Heart right ventricle (tissue), 16 donors: ENCODE measurements at regions of chr3 and their contacts with region 1.

Region 1: GRCh38 chr3:45647148-45647619 is 42.0 kb upstream of the SACM1L start:
- DNase-seq: no peak
- ATAC-seq: peak; percentile 48 to 81 (median 62)
- H3K4me3 ChIP-seq: no peak overlapping the region
- H3K27ac ChIP-seq: peak overlapping the region in 8 of 10 donors; percentile 3 to 80 (median 41)
- H3K4me1 ChIP-seq: peaks cover 0 to 60% (median 47%) of the 10 kb centered on the region in 9 donors
- H3K27me3 ChIP-seq: no peaks in the 10 kb centered on the region
- CTCF ChIP-seq: no peak

Region 2: GRCh38 chr3:45599984-45600650 is 47.1 kb before region 1 on chr3:
- intact Hi-C with region 1: loop called in 3 of 10 experiments (anchors 5 kb)
- DNase-seq: no peak
- ATAC-seq: peak in 1 of 8 donors; percentile 1
- H3K4me3 ChIP-seq: no peak overlapping the region
- H3K27ac ChIP-seq: peak overlapping the region in 8 of 10 donors; percentile 40 to 93 (median 62)
- H3K4me1 ChIP-seq: peaks cover 42 to 100% (median 94%) of the 10 kb centered on the region in 9 donors
- H3K27me3 ChIP-seq: no peaks in the 10 kb centered on the region
- CTCF ChIP-seq: no peak

Region 3: GRCh38 chr3:45607790-45608189 is 39.4 kb before region 1 on chr3:
- intact Hi-C with region 1: loop called in 3 of 10 experiments (anchors 5 kb)
- DNase-seq: peak in 1 of 2 donors; percentile 50
- ATAC-seq: peak in 7 of 8 donors; percentile 30 to 76 (median 65)
- H3K4me3 ChIP-seq: peak overlapping the region in 3 of 10 donors; percentile 0 to 21 (median 11)
- H3K27ac ChIP-seq: peak overlapping the region; percentile 53 to 91 (median 86)
- H3K4me1 ChIP-seq: peaks cover 39 to 100% (median 94%) of the 10 kb centered on the region in 9 donors
- H3K27me3 ChIP-seq: no peaks in the 10 kb centered on the region
- CTCF ChIP-seq: no peak

Region 4: GRCh38 chr3:45626096-45626887 is 20.9 kb before region 1 on chr3:
- intact Hi-C with region 1: loop called in 1 of 10 experiments (anchors 2 kb)
- DNase-seq: no peak
- ATAC-seq: no peak
- H3K4me3 ChIP-seq: no peak overlapping the region
- H3K27ac ChIP-seq: no peak overlapping the region
- H3K4me1 ChIP-seq: peaks cover 2 to 64% (median 34%) of the 10 kb centered on the region in 9 donors
- H3K27me3 ChIP-seq: no peaks in the 10 kb centered on the region
- CTCF ChIP-seq: no peak

Region 5: GRCh38 chr3:45688882-45689756 is 41.9 kb after region 1 on chr3 and contains the start of gene SACM1L:
- intact Hi-C with region 1: no loop called
- DNase-seq: peak; percentile 98 to 99
- ATAC-seq: peak; percentile 96 to 98 (median 98)
- H3K4me3 ChIP-seq: peak within 1 kb of the TSS; percentile 61 to 93 (median 82)
- H3K27ac ChIP-seq: peak within 1 kb of the TSS; percentile 23 to 96 (median 92)
- H3K4me1 ChIP-seq: peaks cover 3 to 69% (median 51%) of the 10 kb centered on the region in 9 donors
- H3K27me3 ChIP-seq: no peaks in the 10 kb centered on the region
- CTCF ChIP-seq: no peak
- total RNA-seq, gene SACM1L: 22.2 to 28.7 (median 23.6) TPM